CD4-positive, alpha-beta memory T cell (primary cell): ENCODE measurements at regions of chr17 and their contacts with region 1.

Region 1: GRCh38 chr17:36148559-36149295 is 27.7 kb downstream of the TBC1D3B start:
- DNase-seq: peak; percentile 44 to 66 (median 57)
- H3K4me3 ChIP-seq: no peak overlapping the region
- H3K4me3 Mint-ChIP-seq: peak overlapping the region in 1 of 8 donors; percentile 64
- H3K27ac ChIP-seq: no peak overlapping the region
- H3K27ac Mint-ChIP-seq: no peak overlapping the region
- H3K4me1 ChIP-seq: no peaks in the 10 kb centered on the region
- H3K4me1 Mint-ChIP-seq: peaks cover 0 to 3% (median under 1%) of the 10 kb centered on the region in 4 donors
- H3K27me3 ChIP-seq: no peaks in the 10 kb centered on the region
- H3K27me3 Mint-ChIP-seq: peaks cover 9 to 26% of the 10 kb centered on the region in 2 donors

Region 2: DNA sequence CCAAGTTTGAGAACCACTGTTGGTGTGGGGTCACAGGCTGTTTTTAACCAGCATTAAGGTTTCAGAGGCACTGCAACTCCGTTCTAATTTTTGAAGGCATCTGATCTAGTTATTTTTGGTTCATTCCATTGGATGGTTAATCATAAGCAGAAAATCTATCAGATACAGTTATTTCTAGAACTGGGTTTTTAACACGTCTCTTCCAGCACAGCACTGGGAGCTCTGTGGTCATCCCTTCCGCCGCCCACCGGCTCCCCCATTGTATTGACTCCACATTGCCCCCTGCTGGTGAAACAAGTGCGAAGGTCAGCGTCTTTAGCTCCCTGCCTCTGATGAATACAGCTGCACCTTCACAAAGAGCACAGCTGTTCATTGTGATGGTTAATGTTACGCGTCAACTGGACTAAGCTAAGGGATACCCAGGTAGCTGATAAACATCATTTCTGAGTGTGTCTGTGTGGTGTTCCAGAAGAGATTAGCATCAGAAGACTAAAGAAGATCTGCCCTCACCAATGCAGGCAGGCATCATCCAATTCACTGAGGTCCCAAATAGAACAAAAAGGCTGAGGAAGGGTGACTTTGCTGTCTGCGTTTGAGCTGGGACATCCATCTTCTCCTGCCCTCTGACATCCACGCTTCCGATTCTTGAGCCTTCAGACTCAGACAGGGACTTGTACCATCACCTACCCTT is 76.2 kb before region 1 on chr17:
- CTCF ChIA-PET with region 1: interaction called, 11 read pairs
- POLR2A ChIA-PET with region 1: no interaction called
- intact Hi-C with region 1: no loop called
- DNase-seq: peak; percentile 28 to 44 (median 37)
- H3K4me3 ChIP-seq: no peak overlapping the region
- H3K4me3 Mint-ChIP-seq: peak overlapping the region in 3 of 8 donors; percentile 24 to 60 (median 27)
- H3K27ac ChIP-seq: no peak overlapping the region
- H3K27ac Mint-ChIP-seq: peak overlapping the region in 1 of 7 donors; percentile 4
- H3K4me1 ChIP-seq: no peaks in the 10 kb centered on the region
- H3K4me1 Mint-ChIP-seq: peaks cover 3 to 9% (median 5%) of the 10 kb centered on the region in 4 donors
- H3K27me3 ChIP-seq: no peaks in the 10 kb centered on the region
- H3K27me3 Mint-ChIP-seq: no peaks in the 10 kb centered on the region